ENCODE measurements at regions of chr16 and their contacts with region 1.

Region 1: GRCh38 chr16:70380861-70381603 is 34.3 kb downstream of the DDX19A start:
- DNase-seq: peak; percentile 91
- ATAC-seq: peak; percentile 94
- H3K4me3 ChIP-seq: peak overlapping the region; percentile 97
- H3K27ac ChIP-seq: peak overlapping the region; percentile 92
- H3K4me1 ChIP-seq: peaks cover 14% of the 10 kb centered on the region
- H3K27me3 ChIP-seq: no peaks in the 10 kb centered on the region
- CTCF ChIP-seq: peak; percentile 13 to 33 (median 32); a peak in 3 of 6 replicates
- EP300 ChIP-seq: no peak
- POLR2A ChIP-seq: peak; percentile 95
- RAD21 ChIP-seq: no peak

Region 2: GRCh38 chr16:70364399-70364798 is 16.6 kb before region 1 on chr16:
- CTCF ChIA-PET with region 1: interaction called, 26 read pairs
- POLR2A ChIA-PET with region 1: interaction called, 3 read pairs
- RAD21 ChIA-PET with region 1: no interaction called
- SMC1A ChIA-PET with region 1: interaction called, 5 read pairs
- in situ Hi-C with region 1: no loop called
- intact Hi-C with region 1: no loop called
- DNase-seq: no peak
- ATAC-seq: peak; percentile 56
- H3K4me3 ChIP-seq: no peak overlapping the region
- H3K27ac ChIP-seq: peak overlapping the region; percentile 27; the same call in 1 of the 2 replicates
- H3K4me1 ChIP-seq: no peaks in the 10 kb centered on the region
- H3K27me3 ChIP-seq: no peaks in the 10 kb centered on the region
- CTCF ChIP-seq: no peak
- EP300 ChIP-seq: no peak
- POLR2A ChIP-seq: no peak
- RAD21 ChIP-seq: no peak

Region 3: GRCh38 chr16:70428178-70428998 is 47.4 kb after region 1 on chr16:
- CTCF ChIA-PET with region 1: no interaction called
- POLR2A ChIA-PET with region 1: interaction called, 20 read pairs
- RAD21 ChIA-PET with region 1: interaction called, 12 read pairs
- SMC1A ChIA-PET with region 1: interaction called, 9 read pairs
- in situ Hi-C with region 1: no loop called
- intact Hi-C with region 1: loop called (anchors 2 kb)
- DNase-seq: peak; percentile 79
- ATAC-seq: peak; percentile 36
- H3K4me3 ChIP-seq: peak overlapping the region; percentile 67
- H3K27ac ChIP-seq: peak overlapping the region; percentile 98
- H3K4me1 ChIP-seq: peaks cover 52% of the 10 kb centered on the region
- H3K27me3 ChIP-seq: no peaks in the 10 kb centered on the region
- CTCF ChIP-seq: no peak
- EP300 ChIP-seq: peak in 1 of 2 experiments; percentile 74; a peak in 2 of 4 replicates
- POLR2A ChIP-seq: peak; percentile 61
- RAD21 ChIP-seq: peak; percentile 17; the same call in 1 of the 2 replicates

Region 4: DNA sequence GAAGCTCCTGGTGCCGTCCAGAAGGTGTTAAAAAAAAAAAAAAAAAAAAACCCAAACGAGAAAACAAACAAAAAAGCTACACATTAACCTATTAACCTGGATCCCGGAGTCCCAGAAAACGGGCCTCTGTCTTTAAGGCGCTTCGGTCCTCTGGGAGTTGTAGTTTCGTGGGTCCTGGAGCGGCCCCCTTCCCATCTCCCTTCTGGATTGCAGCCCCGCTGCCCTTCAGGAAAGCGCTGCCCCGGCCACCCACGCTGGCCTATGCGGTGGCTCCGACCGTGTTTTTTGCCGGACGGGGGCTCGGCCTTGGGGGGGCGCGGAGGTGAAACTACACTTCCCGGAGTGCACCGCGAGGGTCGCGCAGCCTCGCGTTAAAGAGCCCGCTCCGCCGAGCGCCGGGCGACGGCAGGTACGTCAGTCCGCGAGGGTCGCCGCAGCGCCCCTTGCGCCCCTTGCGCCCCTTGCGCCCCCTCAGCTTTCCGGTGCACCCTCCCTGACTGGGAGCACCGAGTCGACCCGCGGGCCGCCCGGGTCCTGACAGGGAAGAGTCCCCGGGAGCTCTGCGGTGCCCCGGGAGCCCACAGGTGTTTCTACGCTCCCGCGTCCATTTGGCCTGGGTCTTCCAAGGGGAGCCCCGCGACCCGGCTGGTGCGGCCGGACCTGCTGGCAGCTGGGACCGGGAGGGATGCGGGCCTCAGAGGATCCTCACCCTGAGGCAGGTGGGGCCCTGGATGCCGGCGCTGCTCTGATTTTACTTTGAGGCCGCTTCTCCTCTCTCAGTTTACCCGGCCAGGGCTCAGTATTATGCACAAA is 73.4 kb after region 1 on chr16 and contains the start of gene FCSK:
- CTCF ChIA-PET with region 1: interaction called, 23 read pairs
- POLR2A ChIA-PET with region 1: interaction called, 8 read pairs
- RAD21 ChIA-PET with region 1: interaction called, 28 read pairs
- SMC1A ChIA-PET with region 1: interaction called, 10 read pairs
- in situ Hi-C with region 1: no loop called
- intact Hi-C with region 1: no loop called
- DNase-seq: no peak
- ATAC-seq: peak; percentile 93
- H3K4me3 ChIP-seq: peak within 1 kb of the TSS; percentile 93
- H3K27ac ChIP-seq: peak within 1 kb of the TSS; percentile 95
- H3K4me1 ChIP-seq: no peaks in the 10 kb centered on the region
- H3K27me3 ChIP-seq: no peaks in the 10 kb centered on the region
- CTCF ChIP-seq: peak; percentile 13 to 22 (median 21); a peak in 3 of 6 replicates
- EP300 ChIP-seq: no peak
- POLR2A ChIP-seq: peak; percentile 74
- RAD21 ChIP-seq: no peak
- polyA plus RNA-seq, gene FCSK: 0.60 to 1.5 TPM

Region 5: DNA sequence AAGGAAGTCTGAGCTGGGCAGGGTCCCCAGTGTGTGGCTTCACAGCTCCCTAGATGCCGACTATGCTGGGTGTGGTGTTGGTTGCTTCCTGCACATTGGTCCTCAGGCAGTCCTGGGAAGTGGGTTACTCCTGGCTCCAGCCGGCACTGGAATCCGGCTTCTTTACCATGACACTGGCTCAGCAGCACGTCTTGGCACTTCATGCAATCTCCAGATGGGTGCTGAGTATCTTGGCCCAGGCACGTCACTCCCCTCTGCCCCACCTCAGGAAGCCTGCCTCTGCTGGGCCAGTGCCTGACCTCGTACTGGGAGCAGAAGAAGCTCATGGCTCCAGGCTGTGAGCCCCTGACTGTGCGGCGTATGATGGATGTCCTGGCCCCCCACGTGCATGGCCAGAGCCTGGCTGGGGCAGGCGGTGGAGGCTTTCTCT is 97.9 kb after region 1 on chr16:
- CTCF ChIA-PET with region 1: interaction called, 8 read pairs
- POLR2A ChIA-PET with region 1: interaction called, 9 read pairs
- RAD21 ChIA-PET with region 1: interaction called, 13 read pairs
- SMC1A ChIA-PET with region 1: interaction called, 11 read pairs
- in situ Hi-C with region 1: no loop called
- intact Hi-C with region 1: loop called (anchors 2 kb)
- DNase-seq: no peak
- ATAC-seq: no peak
- H3K4me3 ChIP-seq: no peak overlapping the region
- H3K27ac ChIP-seq: no peak overlapping the region
- H3K4me1 ChIP-seq: peaks cover 35% of the 10 kb centered on the region
- H3K27me3 ChIP-seq: no peaks in the 10 kb centered on the region
- CTCF ChIP-seq: no peak
- EP300 ChIP-seq: no peak
- POLR2A ChIP-seq: 0 out of 2 replicates have a peak, but pooled peaks have one; percentile 4
- RAD21 ChIP-seq: no peak

Region 6: GRCh38 chr16:70529051-70529777 is 148.2 kb after region 1 on chr16:
- CTCF ChIA-PET with region 1: interaction called, 3 read pairs
- POLR2A ChIA-PET with region 1: interaction called, 5 read pairs
- RAD21 ChIA-PET with region 1: interaction called, 25 read pairs
- SMC1A ChIA-PET with region 1: interaction called, 6 read pairs
- in situ Hi-C with region 1: no loop called
- intact Hi-C with region 1: loop called (anchors 2 kb)
- DNase-seq: no peak
- ATAC-seq: peak; percentile 34
- H3K4me3 ChIP-seq: peak overlapping the region; percentile 43
- H3K27ac ChIP-seq: no peak overlapping the region
- H3K4me1 ChIP-seq: peaks cover 5% of the 10 kb centered on the region; the same call in 1 of the 2 replicates
- H3K27me3 ChIP-seq: no peaks in the 10 kb centered on the region
- CTCF ChIP-seq: peak; percentile 36 to 44 (median 42); a peak in 5 of 6 replicates
- EP300 ChIP-seq: no peak
- POLR2A ChIP-seq: no peak
- RAD21 ChIP-seq: peak; percentile 24; the same call in 1 of the 2 replicates